ENCODE measurements at regions of chr13 and their contacts with region 1.

Region 1: GRCh38 chr13:27171827-27172494 is 350 bp upstream of the USP12 start:
- DNase-seq: peak; percentile 88 to 97 (median 92)
- ATAC-seq: peak; percentile 84
- H3K4me3 ChIP-seq: peak overlapping the region; percentile 72 to 81
- H3K4me3 Mint-ChIP-seq: peak overlapping the region; percentile 79
- H3K27ac ChIP-seq: peak overlapping the region; percentile 74 to 91
- H3K27ac Mint-ChIP-seq: peak overlapping the region; percentile 89
- H3K4me1 ChIP-seq: peaks cover 30% of the 10 kb centered on the region
- H3K4me1 Mint-ChIP-seq: peaks cover 42% of the 10 kb centered on the region
- H3K27me3 ChIP-seq: no peaks in the 10 kb centered on the region
- H3K27me3 Mint-ChIP-seq: no peaks in the 10 kb centered on the region
- CTCF ChIP-seq: no peak

Region 2: GRCh38 chr13:26221721-26222519 is 950.0 kb before region 1 on chr13 and contains the start of gene RNF6:
- CTCF ChIA-PET with region 1: no interaction called
- POLR2A ChIA-PET with region 1: no interaction called
- intact Hi-C with region 1: loop called in 1 of 2 experiments (anchors 5 kb)
- DNase-seq: peak; percentile 73 to 97 (median 86)
- ATAC-seq: peak; percentile 92
- H3K4me3 ChIP-seq: peak within 1 kb of the TSS; percentile 97 to 99
- H3K4me3 Mint-ChIP-seq: peak within 1 kb of the TSS; percentile 99
- H3K27ac ChIP-seq: peak within 1 kb of the TSS; percentile 90 to 98
- H3K27ac Mint-ChIP-seq: peak within 1 kb of the TSS; percentile 100
- H3K4me1 ChIP-seq: peaks cover 26% of the 10 kb centered on the region
- H3K4me1 Mint-ChIP-seq: peaks cover 45% of the 10 kb centered on the region
- H3K27me3 ChIP-seq: no peaks in the 10 kb centered on the region
- H3K27me3 Mint-ChIP-seq: no peaks in the 10 kb centered on the region
- CTCF ChIP-seq: no peak
- total RNA-seq, gene RNF6: 50.3 to 55.0 TPM

Region 3: DNA sequence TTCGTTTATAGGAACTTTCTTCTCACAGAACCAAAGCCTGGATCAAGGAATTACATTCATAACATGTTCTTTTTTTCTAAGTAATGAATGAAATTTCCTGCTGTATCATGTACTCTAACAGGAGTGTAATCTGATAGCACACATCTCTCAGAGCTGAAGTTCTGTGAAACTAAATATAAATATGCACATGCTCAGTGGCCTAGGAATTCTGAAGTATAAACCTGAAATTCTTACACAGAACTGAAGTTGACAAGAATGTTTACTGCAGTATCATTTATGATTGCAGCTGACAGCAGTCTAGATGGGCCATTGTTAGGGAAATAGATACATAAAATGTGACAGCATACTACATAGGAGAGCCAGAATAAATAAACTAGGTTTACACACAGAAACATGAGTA is 54.8 kb before region 1 on chr13:
- CTCF ChIA-PET with region 1: no interaction called
- POLR2A ChIA-PET with region 1: no interaction called
- intact Hi-C with region 1: loop called in 1 of 2 experiments (anchors 10 kb)
- DNase-seq: no peak
- ATAC-seq: no peak
- H3K4me3 ChIP-seq: no peak overlapping the region
- H3K4me3 Mint-ChIP-seq: no peak overlapping the region
- H3K27ac ChIP-seq: no peak overlapping the region
- H3K27ac Mint-ChIP-seq: no peak overlapping the region
- H3K4me1 ChIP-seq: no peaks in the 10 kb centered on the region
- H3K4me1 Mint-ChIP-seq: peaks cover 47% of the 10 kb centered on the region
- H3K27me3 ChIP-seq: no peaks in the 10 kb centered on the region
- H3K27me3 Mint-ChIP-seq: no peaks in the 10 kb centered on the region
- CTCF ChIP-seq: no peak

Region 4: GRCh38 chr13:27270594-27271520 is 98.9 kb after region 1 on chr13 and contains the start of gene RASL11A:
- CTCF ChIA-PET with region 1: interaction called, 3 read pairs
- POLR2A ChIA-PET with region 1: no interaction called
- intact Hi-C with region 1: loop called (anchors 5 kb)
- DNase-seq: peak; percentile 49 to 85 (median 74)
- ATAC-seq: peak; percentile 93
- H3K4me3 ChIP-seq: peak within 1 kb of the TSS; percentile 58 to 88
- H3K4me3 Mint-ChIP-seq: peak within 1 kb of the TSS; percentile 92
- H3K27ac ChIP-seq: peak within 1 kb of the TSS in 1 of 2 experiments; percentile 46
- H3K27ac Mint-ChIP-seq: peak within 1 kb of the TSS; percentile 86
- H3K4me1 ChIP-seq: peaks cover 9% of the 10 kb centered on the region
- H3K4me1 Mint-ChIP-seq: peaks cover 25% of the 10 kb centered on the region
- H3K27me3 ChIP-seq: no peaks in the 10 kb centered on the region
- H3K27me3 Mint-ChIP-seq: peaks cover 2% of the 10 kb centered on the region
- CTCF ChIP-seq: peak; percentile 98
- total RNA-seq, gene RASL11A: 9.0 to 12.9 TPM

Region 5: DNA sequence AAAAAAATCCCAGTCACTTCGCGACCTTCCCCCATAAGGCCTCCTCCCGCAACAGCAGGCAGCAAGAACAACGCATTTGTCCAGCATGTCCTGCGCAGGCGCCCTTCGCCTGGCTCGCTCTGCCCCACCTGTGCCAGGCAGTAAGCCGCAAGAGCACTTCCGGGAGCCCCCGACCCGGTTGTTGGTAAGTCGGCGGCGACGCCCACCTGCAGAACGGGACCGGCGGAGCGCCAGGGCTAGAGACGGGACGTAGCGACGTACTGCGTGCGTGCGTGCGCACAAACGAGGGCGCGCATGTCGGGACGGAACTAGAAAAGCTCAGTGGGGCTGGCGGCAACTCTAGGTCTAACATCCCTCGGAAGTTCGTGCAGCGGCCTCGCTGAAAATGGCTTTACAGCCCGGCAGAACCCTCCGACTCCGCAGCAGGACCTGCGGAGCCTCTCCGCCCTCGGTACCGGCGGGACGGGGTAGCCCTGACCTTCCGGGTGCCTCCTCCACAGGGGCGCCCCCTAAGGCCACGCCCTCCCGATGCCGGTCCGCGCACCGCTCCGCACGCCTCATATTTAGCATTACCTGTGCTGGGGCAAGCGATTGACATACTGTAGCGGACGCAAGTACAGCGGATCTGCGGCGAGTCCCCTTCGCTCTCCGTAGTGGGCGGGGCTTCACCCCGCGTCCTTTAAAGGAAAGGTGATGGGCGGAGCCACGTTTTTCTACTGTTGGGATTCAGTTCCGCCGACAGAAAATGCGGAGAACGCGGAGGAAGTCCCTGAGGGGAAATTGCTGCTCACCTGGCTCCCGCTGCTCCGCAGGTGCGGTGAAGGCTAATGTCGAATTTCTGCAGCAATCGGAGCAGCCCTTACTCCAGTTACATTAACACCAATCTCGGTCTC is 278.2 kb after region 1 on chr13 and contains the start of gene MTIF3:
- CTCF ChIA-PET with region 1: no interaction called
- POLR2A ChIA-PET with region 1: interaction called, 3 read pairs
- intact Hi-C with region 1: loop called (anchors 1 to 2 kb)
- DNase-seq: peak; percentile 94 to 99 (median 98)
- ATAC-seq: peak; percentile 81
- H3K4me3 ChIP-seq: peak within 1 kb of the TSS; percentile 82 to 92
- H3K4me3 Mint-ChIP-seq: peak within 1 kb of the TSS; percentile 93
- H3K27ac ChIP-seq: peak within 1 kb of the TSS; percentile 90 to 97
- H3K27ac Mint-ChIP-seq: peak within 1 kb of the TSS; percentile 99
- H3K4me1 ChIP-seq: peaks cover 54% of the 10 kb centered on the region
- H3K4me1 Mint-ChIP-seq: peaks cover 57% of the 10 kb centered on the region
- H3K27me3 ChIP-seq: no peaks in the 10 kb centered on the region
- H3K27me3 Mint-ChIP-seq: no peaks in the 10 kb centered on the region
- CTCF ChIP-seq: no peak
- total RNA-seq, gene MTIF3: 12.7 to 13.0 TPM

Measured in CD8-positive, alpha-beta T cell (primary cell).